RWPE1 (cell line): ENCODE measurements at regions of chr19 and their contacts with region 1.

Region 1: GRCh38 chr19:35509861-35510625 is 3.4 kb downstream of the DMKN start:
- DNase-seq: peak; percentile 93
- H3K27ac ChIP-seq: peak overlapping the region; percentile 90
- CTCF ChIP-seq: peak; percentile 95

Region 2: GRCh38 chr19:35495107-35496064 is 14.7 kb before region 1 on chr19:
- CTCF ChIA-PET with region 1: interaction called, 10 read pairs
- POLR2A ChIA-PET with region 1: interaction called, 3 read pairs
- DNase-seq: peak; percentile 79
- H3K27ac ChIP-seq: no peak overlapping the region
- CTCF ChIP-seq: peak; percentile 90

Region 3: GRCh38 chr19:35549174-35549788 is 39.2 kb after region 1 on chr19:
- CTCF ChIA-PET with region 1: interaction called, 16 read pairs
- POLR2A ChIA-PET with region 1: no interaction called
- DNase-seq: peak; percentile 53
- H3K27ac ChIP-seq: no peak overlapping the region
- CTCF ChIP-seq: peak; percentile 76

Region 4: DNA sequence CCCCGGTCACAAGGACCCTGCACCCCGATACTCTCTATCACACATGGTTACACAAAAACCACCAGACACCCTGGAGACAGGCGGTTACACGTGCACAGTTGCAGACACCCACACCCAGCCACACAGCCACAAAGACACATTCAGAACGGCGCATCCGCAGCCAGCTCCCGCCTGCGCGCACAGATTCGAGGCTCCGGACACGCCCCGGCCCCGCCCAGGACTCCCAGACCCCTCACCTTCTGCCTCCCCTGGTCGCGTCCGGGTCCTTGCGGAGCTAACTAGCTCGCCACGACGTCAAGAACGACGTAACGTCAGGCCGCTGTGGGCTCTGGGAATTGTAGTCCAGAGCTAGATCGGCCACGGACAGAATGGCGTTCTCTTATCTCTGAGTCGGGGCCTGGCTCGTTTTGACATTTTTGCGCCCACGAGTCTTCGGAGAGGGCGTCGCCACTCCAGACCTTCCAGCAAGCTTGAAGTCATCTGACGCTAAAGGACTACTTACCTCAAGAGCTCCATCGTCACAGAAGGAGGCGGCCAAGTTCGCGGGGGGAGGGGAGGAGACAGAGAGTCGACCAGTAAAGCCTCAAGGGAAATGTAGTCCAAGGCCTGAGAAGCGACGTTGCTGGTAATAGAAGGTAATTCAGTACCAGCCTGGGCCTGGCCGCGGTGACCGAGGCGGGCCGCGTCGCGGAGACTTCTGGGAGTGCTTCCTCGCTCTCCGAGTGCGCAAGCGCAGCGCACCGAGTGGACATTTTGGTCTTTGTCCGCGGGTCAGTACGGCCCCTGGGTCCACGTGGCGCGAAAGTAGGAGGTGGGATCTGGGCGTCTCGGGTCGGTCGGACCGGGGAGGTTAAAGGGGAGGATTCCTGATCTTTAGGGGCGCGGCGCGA is 704.6 kb after region 1 on chr19 and contains the starts of genes ZNF146 and ZNF565:
- CTCF ChIA-PET with region 1: interaction called, 10 read pairs
- POLR2A ChIA-PET with region 1: no interaction called
- DNase-seq: peak; percentile 92
- H3K27ac ChIP-seq: peak within 1 kb of the TSS; percentile 92
- CTCF ChIP-seq: no peak